Activated CD4-positive, alpha-beta T cell treated with anti-CD3 and anti-CD28 coated beads for 36 hours (primary cell): ENCODE measurements at regions of chr6 and their contacts with region 1.

Region 1: DNA sequence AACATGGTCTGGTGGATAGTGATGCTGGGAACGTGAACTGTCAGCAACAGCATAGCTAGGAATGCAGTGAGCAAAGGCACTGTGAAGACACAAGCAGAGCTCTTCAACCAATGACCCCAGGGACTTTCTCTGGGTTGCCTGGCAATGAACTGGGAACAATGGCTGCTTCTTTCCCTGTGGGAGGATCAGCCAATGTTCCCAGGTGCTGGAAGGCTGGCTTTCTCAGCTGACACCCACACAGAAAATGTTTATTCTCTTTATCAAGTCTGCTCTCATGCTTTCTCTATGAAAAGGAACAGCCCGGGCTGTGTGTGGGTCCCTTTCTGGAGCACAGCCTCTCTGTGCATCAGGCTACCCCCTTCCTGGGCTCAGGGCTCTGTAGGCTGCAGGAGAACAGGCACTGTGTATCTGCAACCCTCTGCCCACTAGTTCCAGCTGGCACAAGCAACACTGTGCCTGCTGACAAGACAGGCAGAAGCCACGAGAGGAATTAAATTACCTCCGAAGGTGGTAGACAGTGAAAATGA is 54.2 kb downstream of the HFE start:
- DNase-seq: no peak
- ATAC-seq: no peak
- H3K4me3 Mint-ChIP-seq: no peak overlapping the region
- H3K27ac Mint-ChIP-seq: no peak overlapping the region
- H3K4me1 Mint-ChIP-seq: no peaks in the 10 kb centered on the region
- H3K27me3 Mint-ChIP-seq: no peaks in the 10 kb centered on the region

Region 2: DNA sequence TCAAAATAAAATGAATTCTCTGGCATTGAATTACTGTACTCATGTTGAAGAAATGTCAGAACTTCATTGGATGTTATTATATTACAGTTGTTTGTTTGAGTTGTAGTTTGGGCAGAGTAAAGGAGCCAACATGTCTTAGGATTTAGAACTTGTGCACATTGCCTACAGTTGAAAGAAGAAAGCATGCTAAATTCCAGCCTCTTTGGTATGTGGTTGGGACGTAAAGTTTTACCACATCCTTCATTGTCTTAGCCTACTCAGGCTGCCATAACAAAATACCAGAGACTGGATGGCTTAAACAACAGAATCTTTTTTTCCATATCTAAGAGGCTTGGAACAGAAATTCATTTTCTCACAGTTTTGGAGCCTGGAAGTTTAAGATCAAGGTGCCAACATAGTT is 11.8 kb before region 1 on chr6:
- CTCF ChIA-PET with region 1: interaction called, 13 read pairs
- POLR2A ChIA-PET with region 1: no interaction called
- intact Hi-C with region 1: loop called in 1 of 2 experiments (anchors 2 kb)
- DNase-seq: no peak
- ATAC-seq: no peak
- H3K4me3 Mint-ChIP-seq: no peak overlapping the region
- H3K27ac Mint-ChIP-seq: no peak overlapping the region
- H3K4me1 Mint-ChIP-seq: peaks cover 46% of the 10 kb centered on the region
- H3K27me3 Mint-ChIP-seq: no peaks in the 10 kb centered on the region